Heart right ventricle (tissue), 16 donors: ENCODE measurements at regions of chrX and their contacts with region 1.

Region 1: GRCh38 chrX:72366613-72367454 is 61.1 kb upstream of the CITED1 start:
- DNase-seq: no peak
- ATAC-seq: peak in 1 of 8 donors; percentile 45
- H3K4me3 ChIP-seq: no peak overlapping the region
- H3K27ac ChIP-seq: no peak overlapping the region
- H3K4me1 ChIP-seq: no peaks in the 10 kb centered on the region
- H3K27me3 ChIP-seq: peaks cover 0 to 39% (median 0%) of the 10 kb centered on the region in 7 donors
- CTCF ChIP-seq: no peak

Region 2: GRCh38 chrX:72306851-72307645 is 59.8 kb before region 1 on chrX:
- intact Hi-C with region 1: loop called in 1 of 10 experiments (anchors 10 kb)
- DNase-seq: peak; percentile 40 to 43
- ATAC-seq: peak; percentile 70 to 85 (median 79)
- H3K4me3 ChIP-seq: peak overlapping the region; percentile 38 to 66 (median 55)
- H3K27ac ChIP-seq: no peak overlapping the region
- H3K4me1 ChIP-seq: peaks cover 0 to 37% (median 19%) of the 10 kb centered on the region in 9 donors
- H3K27me3 ChIP-seq: peaks cover 0 to 99% (median 0%) of the 10 kb centered on the region in 7 donors
- CTCF ChIP-seq: no peak